IMR-90 (cell line): ENCODE measurements at regions of chr5 and their contacts with region 1.

Region 1: GRCh38 chr5:53481887-53482716 is 1.7 kb downstream of the FST start:
- DNase-seq: peak; percentile 71
- ATAC-seq: peak; percentile 8
- H3K4me3 ChIP-seq: peak overlapping the region; percentile 100
- H3K27ac ChIP-seq: peak overlapping the region; percentile 99
- H3K4me1 ChIP-seq: peaks cover 15% of the 10 kb centered on the region
- H3K27me3 ChIP-seq: no peaks in the 10 kb centered on the region
- CTCF ChIP-seq: 0 out of 2 replicates have a peak, but pooled peaks have one; percentile 5
- POLR2A ChIP-seq: peak; percentile 69
- RAD21 ChIP-seq: peak; percentile 39; the same call in 1 of the 2 replicates

Region 2: DNA sequence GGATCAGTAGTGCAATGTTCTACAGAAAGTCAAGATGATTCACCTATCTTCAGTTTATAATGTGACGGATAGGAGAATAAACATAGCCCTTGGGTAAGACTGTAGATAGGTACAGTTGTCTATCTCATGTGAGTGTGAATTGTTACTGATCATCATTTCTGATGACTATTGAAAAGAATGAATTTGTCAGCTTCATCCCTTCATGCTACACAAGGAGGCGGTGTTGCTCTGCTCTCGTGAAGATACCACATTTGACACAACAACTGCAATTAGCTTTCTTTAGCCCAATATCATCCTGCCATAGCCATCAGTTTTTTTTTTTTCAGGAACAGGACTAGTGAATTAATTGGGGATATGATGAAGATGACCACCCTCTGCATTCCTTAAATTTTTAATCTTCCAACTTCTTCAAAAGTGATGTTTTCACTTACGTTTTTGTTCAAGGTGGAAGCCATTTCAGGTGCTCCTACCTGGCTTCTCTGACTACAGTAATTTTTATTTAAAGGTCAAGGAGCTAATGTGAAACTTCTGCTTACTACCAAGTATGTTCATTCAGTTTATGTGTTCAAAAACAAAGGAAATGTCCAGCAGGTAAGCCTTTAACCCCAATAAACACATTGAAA is 219.6 kb before region 1 on chr5:
- CTCF ChIA-PET with region 1: no interaction called
- POLR2A ChIA-PET with region 1: no interaction called
- dilution Hi-C with region 1: no loop called
- in situ Hi-C with region 1: no loop called
- intact Hi-C with region 1: loop called (anchors 1 kb)
- DNase-seq: peak; percentile 72
- ATAC-seq: peak; percentile 80
- H3K4me3 ChIP-seq: no peak overlapping the region
- H3K27ac ChIP-seq: no peak overlapping the region
- H3K4me1 ChIP-seq: peaks cover 2% of the 10 kb centered on the region; the same call in 1 of the 2 replicates
- H3K27me3 ChIP-seq: no peaks in the 10 kb centered on the region
- CTCF ChIP-seq: peak; percentile 90
- POLR2A ChIP-seq: peak; percentile 50; the same call in 1 of the 2 replicates
- RAD21 ChIP-seq: peak; percentile 96

Region 3: DNA sequence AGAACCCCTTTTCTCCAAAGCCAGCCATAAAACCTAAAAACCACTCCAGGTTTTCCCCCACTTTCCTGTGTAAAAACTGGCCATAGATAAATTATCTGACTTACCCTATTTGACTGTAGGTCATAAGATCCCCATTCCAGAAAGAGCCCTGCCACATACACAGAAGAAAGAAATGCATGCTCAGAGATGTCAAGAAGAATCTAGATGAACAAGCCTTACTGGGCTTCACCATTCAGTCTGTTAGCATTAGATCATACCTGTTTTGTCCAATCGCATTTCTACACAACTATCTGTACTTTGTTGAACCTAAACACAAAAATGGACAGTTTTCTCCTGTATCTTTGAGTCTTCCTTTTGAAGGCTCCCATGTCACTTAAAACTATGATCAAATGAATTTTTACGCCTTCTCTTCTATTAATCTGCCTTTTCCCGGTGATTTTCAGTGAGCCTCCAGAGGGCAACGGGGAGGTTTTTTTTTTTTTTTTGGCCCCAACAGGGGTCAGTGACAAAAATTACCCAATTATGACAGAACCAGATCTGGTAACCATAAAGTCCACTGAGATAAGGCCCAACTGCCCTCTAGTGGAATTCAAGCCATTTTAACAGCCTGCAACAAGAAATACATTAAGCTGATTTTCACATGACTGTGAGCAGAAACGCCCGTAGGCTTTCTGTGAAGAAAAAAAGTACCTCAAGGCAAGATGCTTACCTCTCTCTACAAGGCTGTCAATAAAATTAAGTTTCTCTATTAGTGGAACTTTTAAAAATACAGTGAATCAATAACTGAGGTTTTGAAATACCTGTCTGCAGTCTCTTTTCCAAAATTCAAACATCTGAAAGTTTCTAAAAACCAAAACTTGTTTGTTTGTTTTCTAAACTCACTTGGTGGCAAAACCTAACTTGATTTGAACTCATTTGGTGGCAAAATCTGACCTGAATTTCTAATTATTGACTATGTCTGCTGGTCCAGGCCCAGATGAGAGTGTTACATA is 51.5 kb before region 1 on chr5:
- CTCF ChIA-PET with region 1: no interaction called
- POLR2A ChIA-PET with region 1: interaction called, 9 read pairs
- dilution Hi-C with region 1: no loop called
- in situ Hi-C with region 1: no loop called
- intact Hi-C with region 1: loop called (anchors 2 kb)
- DNase-seq: peak; percentile 87
- ATAC-seq: peak; percentile 67
- H3K4me3 ChIP-seq: no peak overlapping the region
- H3K27ac ChIP-seq: peak overlapping the region; percentile 80
- H3K4me1 ChIP-seq: peaks cover 14% of the 10 kb centered on the region
- H3K27me3 ChIP-seq: no peaks in the 10 kb centered on the region
- CTCF ChIP-seq: peak; percentile 82
- POLR2A ChIP-seq: peak; percentile 48; the same call in 1 of the 2 replicates
- RAD21 ChIP-seq: peak; percentile 88

Region 4: DNA sequence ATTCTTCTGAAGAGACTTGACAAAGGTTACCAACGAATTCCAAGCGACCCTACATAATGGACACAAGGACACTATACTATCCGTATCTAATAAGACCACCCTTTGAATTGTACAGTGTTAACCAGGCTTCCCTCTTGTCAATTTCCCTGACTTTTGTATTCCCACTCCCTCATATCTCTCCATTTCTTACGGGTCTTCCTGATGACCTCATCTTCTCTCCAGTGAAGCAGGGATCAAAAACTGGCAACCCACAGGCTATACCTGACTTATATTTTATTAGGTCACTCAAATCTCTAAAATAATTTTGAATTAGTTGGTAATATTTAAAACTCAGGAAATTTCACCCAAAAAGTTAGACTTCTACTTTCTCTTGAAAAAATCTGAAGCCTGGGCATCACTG is 12.4 kb after region 1 on chr5:
- CTCF ChIA-PET with region 1: no interaction called
- POLR2A ChIA-PET with region 1: no interaction called
- dilution Hi-C with region 1: no loop called
- in situ Hi-C with region 1: no loop called
- intact Hi-C with region 1: no loop called
- DNase-seq: no peak
- ATAC-seq: no peak
- H3K4me3 ChIP-seq: no peak overlapping the region
- H3K27ac ChIP-seq: no peak overlapping the region
- H3K4me1 ChIP-seq: peaks cover 2% of the 10 kb centered on the region; the same call in 1 of the 2 replicates
- H3K27me3 ChIP-seq: no peaks in the 10 kb centered on the region
- CTCF ChIP-seq: no peak
- POLR2A ChIP-seq: no peak
- RAD21 ChIP-seq: no peak

Region 5: DNA sequence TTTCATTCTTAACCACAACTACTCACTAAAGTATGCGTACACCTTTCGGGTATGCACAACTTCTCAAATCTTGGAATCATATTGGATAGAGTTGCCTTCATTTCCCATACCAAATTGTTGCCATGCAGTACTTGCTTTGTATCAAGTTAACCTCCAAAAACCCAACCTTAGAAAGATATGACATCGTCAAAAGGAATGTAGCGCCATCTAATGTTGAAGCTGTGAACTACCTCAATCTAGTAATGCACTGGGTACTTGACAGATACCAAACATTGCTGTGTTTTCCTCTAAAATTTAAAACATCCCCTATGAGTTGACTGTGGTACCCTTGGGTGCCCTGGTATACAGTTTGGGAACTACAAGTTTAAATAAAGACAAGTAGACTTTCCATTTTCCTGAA is 509.8 kb after region 1 on chr5:
- CTCF ChIA-PET with region 1: no interaction called
- POLR2A ChIA-PET with region 1: no interaction called
- dilution Hi-C with region 1: no loop called
- in situ Hi-C with region 1: no loop called
- intact Hi-C with region 1: loop called (anchors 10 kb)
- DNase-seq: no peak
- ATAC-seq: no peak
- H3K4me3 ChIP-seq: no peak overlapping the region
- H3K27ac ChIP-seq: no peak overlapping the region
- H3K4me1 ChIP-seq: peaks cover 7% of the 10 kb centered on the region; the same call in 1 of the 2 replicates
- H3K27me3 ChIP-seq: no peaks in the 10 kb centered on the region
- CTCF ChIP-seq: peak; percentile 32; the same call in 1 of the 2 replicates
- POLR2A ChIP-seq: no peak
- RAD21 ChIP-seq: peak; percentile 34; the same call in 1 of the 2 replicates

Region 6: GRCh38 chr5:54212331-54212730 is 730.2 kb after region 1 on chr5:
- CTCF ChIA-PET with region 1: no interaction called
- POLR2A ChIA-PET with region 1: interaction called, 23 read pairs
- dilution Hi-C with region 1: no loop called
- in situ Hi-C with region 1: no loop called
- intact Hi-C with region 1: no loop called
- DNase-seq: no peak
- ATAC-seq: no peak
- H3K4me3 ChIP-seq: no peak overlapping the region
- H3K27ac ChIP-seq: no peak overlapping the region
- H3K4me1 ChIP-seq: peaks cover 3% of the 10 kb centered on the region; the same call in 1 of the 2 replicates
- H3K27me3 ChIP-seq: no peaks in the 10 kb centered on the region
- CTCF ChIP-seq: no peak
- POLR2A ChIP-seq: no peak
- RAD21 ChIP-seq: no peak